Esophagus squamous epithelium (tissue), 5 donors: ENCODE measurements at regions of chr11 and their contacts with region 1.

Region 1: DNA sequence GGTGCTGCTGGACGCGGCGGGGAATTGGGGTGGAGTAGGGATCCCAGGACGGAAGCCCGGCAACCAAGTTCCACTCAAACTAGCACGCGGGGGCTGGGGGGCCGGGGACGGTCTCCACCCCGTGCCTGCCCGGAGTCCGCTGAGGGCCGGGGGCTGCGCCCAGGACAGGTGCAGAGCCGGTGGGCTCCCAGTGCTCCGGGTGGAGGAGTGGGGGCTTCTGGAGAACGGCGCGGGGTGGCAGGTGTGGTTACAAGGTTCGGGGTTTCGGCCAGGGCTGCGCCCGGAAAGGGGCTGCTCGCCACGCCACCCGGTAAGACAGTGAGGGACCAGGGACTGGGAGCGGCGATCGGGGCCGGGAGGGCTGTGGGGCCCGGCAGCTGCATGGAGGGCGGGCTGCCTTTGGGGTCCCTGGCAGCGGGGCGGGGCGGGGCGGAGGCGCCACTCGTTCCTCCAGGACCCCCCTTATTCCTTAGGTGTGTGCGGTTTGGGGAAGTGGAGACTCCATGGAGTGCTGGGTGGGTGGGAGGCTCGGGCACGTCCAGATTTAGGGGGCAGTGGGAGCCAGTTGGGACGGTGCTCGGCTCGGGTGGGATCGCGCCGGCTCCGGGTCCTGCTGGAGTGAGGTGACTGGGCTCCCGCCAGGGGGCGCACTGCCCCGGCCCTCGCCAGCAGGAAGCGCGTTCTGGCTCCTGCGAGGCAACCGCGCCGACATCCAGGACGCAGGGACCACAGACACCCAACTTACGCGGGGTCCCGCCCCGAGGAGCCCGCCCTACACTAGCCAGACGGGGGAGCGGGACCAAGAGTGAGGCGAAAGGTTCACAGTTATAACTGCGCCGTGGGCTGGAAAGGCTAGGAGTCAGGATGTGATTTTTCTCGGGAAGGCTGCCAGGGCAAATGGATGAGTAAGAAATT is 868 bp downstream of the TSPAN18 start:
- DNase-seq: no peak
- H3K4me3 ChIP-seq: peak overlapping the region; percentile 35 to 79 (median 56)
- H3K27ac ChIP-seq: peak overlapping the region; percentile 58 to 86 (median 81)
- H3K4me1 ChIP-seq: peaks cover 11 to 71% (median 35%) of the 10 kb centered on the region in 3 donors
- H3K27me3 ChIP-seq: peaks cover 0 to 54% (median 0%) of the 10 kb centered on the region in 4 donors
- CTCF ChIP-seq: peak; percentile 85 to 96 (median 88)
- POLR2A ChIP-seq: no peak

Region 2: DNA sequence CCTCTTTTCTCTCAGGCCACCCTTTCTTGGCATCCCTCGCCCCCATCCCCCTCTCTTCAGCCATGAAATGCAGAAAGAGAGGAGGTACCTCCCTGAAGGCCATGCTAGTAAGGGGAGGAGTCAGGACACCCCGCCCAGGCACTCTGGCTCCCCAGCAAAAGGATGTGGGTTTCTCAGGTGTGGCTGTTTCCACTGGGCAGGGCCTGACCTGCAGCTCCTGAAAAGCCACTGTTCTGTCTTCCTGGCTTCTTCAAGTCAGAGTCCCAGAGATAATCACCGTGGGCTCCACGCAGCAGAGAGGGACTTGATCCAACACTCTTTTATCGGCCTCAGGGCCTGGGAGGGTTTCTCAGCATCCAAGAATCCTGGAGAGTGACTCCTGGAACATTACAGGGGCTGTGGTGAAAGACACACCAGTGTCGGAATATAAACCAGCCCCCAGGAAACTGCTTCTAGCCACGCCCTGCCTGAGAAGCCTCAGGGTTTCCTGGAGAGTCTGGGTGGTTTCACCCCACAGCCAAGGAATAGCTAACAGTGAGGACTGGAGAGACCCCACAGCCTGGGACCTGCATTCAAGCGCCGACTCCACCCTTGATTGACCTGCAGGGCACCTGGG is 46.5 kb before region 1 on chr11:
- intact Hi-C with region 1: no loop called
- DNase-seq: no peak
- H3K4me3 ChIP-seq: no peak overlapping the region
- H3K27ac ChIP-seq: no peak overlapping the region
- H3K4me1 ChIP-seq: no peaks in the 10 kb centered on the region
- H3K27me3 ChIP-seq: peaks cover 0 to under 1% (median 0%) of the 10 kb centered on the region in 4 donors
- CTCF ChIP-seq: no peak
- POLR2A ChIP-seq: no peak

Region 3: DNA sequence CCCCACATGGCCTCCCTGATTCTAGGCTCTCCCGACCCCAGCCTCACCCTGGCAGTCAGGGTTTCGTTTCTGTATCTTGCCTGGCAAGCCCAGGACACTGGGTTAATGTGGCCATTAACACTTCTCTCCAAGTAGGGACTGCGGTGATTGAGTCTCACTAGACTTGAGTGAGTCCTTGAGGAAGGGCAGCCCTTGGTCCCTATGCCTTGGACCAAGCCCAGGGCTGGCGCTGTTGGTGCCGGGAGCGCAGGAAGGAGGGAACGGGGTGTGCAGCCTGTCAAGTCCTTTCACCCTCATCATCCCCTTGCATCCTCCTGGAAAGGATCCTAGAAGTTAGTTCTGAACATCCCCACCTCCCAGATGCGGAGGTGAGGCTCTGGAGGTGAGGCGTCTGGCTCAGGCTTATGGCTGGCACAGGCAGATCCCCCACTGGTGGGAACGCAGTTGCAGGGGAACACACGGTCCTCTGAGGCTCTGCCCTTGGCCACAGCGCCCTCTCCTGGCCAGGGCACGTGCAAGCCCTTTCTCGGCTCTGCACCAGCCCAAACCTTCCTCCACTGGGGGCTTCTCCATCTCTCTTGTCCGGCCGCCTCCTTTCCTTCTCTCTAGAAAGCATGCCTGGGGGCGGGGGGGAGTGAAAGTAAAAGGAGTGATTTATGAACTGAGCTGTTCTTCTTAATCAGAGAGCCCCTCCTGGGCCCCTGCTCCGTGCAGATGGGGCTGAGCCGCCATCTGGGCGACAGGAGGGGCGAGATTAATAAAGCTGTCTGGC is 166.4 kb after region 1 on chr11:
- intact Hi-C with region 1: loop called (anchors 5 kb)
- DNase-seq: no peak
- H3K4me3 ChIP-seq: no peak overlapping the region
- H3K27ac ChIP-seq: peak overlapping the region; percentile 31 to 82 (median 70)
- H3K4me1 ChIP-seq: peaks cover 0 to 21% (median 11%) of the 10 kb centered on the region in 3 donors
- H3K27me3 ChIP-seq: peaks cover 0 to 18% (median 0%) of the 10 kb centered on the region in 4 donors
- CTCF ChIP-seq: peak; percentile 38 to 77 (median 76)
- POLR2A ChIP-seq: no peak

Region 4: DNA sequence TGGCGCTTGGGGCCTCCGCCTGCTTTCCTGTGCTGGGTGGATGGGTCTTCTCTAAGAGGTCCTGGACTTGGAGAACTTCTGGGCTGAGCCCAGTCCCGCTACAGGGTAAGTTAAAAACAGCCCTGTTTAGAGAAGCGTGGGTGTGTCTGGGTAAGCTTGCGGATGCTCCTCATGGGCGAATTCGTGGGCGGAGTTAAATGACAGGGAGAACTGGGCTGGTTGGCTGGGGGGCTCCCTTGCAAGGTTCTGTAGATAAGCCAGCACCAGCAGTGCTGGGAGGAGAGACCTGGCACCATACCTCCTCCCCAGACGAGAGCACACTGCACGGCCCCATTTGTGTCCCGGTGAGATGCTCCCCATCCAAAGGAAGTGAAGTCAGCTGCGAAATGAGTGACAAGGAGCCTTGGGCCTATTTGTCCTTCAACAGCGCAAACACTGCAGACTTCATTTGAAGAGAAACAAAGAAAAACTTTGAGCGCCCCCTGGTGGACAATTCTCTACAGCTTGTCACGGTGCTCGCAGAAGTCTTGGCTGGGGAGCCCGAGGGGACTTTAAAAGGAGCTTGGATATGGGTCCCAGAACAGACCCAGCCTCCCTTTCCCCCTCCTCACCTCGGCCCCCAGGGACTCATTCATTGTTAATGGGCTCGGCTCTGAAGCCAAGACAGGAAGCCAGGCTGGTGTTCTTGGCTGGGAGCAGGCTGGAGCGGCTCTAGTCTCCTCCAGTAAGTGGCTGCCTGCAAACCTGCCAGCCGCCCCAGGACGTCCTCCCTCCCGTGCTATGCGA is 183.6 kb after region 1 on chr11:
- intact Hi-C with region 1: loop called (anchors 5 kb)
- DNase-seq: peak; percentile 25
- H3K4me3 ChIP-seq: no peak overlapping the region
- H3K27ac ChIP-seq: no peak overlapping the region
- H3K4me1 ChIP-seq: peaks cover 0 to 24% (median 0%) of the 10 kb centered on the region in 3 donors
- H3K27me3 ChIP-seq: peaks cover 0 to 9% (median 0%) of the 10 kb centered on the region in 4 donors
- CTCF ChIP-seq: peak; percentile 72 to 89 (median 84)
- POLR2A ChIP-seq: no peak